ENCODE measurements at regions of chr2 and their contacts with region 1.

Region 1: DNA sequence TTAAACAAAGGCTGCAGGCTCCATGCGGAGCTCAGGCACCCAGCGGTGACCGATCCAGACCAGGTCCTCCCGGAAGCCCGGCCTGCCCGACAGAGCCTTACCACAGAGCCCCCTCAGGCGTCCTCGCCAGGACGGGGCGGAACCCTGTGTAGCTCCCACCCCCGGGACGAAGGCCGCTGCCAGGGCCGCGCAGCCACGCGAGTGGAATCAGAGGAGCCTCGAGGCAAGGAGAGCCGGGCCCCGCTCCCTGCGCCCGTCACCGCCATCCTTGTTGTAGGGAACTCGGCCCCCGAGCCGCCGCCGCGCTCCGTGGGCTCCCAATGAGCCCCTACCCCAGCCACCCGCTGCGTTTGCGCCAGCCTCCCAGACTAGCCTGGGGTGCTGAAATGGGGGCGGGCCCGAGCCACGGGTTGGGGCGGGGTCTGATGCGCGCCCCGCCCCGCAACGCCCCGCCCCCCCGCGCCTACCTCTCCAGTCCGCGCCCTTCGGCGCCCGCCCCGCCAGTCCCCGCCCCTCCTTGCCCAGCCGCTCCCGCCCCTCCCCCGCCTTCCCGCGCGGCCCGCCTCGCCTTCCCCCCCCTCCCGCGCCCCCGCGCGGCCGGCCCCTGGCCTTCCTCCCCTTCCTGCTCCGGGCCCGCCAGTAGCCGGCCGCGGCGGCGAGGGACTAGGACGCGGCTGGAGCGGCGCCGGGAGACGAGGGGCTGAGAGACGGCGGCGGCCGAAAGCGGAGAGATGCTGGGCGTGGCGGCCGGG is at the start of gene LIMS1:
- DNase-seq: peak; percentile 87 to 90
- ATAC-seq: peak; percentile 85 to 86
- H3K4me3 ChIP-seq: peak within 1 kb of the TSS; percentile 66 to 99 (median 72)
- H3K27ac ChIP-seq: peak within 1 kb of the TSS; percentile 88 to 99 (median 90)
- H3K4me1 ChIP-seq: peaks cover 14 to 19% of the 10 kb centered on the region in 2 donors
- H3K27me3 ChIP-seq: no peaks in the 10 kb centered on the region
- CTCF ChIP-seq: peak in 1 of 5 experiments; percentile 16
- POLR2A ChIP-seq: peak; percentile 90 to 93
- total RNA-seq, gene LIMS1: 147 to 308 (median 224) TPM

Region 2: DNA sequence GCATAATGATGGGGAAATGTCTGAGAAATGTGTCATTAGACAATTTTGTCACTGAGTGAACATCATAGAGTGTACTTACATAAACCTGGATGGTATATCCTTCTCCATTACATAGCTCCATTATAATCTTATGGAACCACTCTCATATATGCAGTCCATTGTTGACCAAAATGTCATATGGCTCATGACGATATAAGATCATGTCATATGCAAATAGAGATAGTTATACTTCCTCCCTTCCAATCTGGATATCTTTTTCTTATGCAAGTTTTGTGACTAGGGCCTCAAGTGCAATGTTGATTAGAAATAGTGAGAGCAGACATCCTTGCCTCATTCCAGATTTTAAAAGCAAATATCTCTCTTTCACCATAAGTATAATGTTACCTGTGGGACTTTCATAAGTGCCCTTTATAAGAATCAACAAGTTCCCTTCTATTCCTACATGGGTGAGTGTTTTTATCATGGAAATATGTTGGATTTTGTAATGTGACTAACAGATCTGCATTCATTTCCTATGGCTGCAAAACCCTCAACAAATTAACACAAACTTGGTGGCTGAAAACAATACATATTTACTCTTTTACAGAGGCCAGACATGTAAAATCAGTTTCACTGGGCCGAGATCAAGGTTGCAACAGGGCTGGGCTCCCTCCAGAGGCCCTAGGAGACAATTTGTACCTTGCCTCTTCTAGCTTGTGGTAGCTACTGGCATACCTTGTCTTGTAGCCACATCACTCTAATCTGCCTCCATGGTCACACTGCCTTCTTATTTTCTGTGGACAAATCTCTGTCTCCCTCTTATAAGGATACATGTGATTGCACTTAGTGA is 177.9 kb before region 1 on chr2:
- in situ Hi-C with region 1: no loop called
- intact Hi-C with region 1: no loop called
- DNase-seq: no peak
- ATAC-seq: no peak
- H3K4me3 ChIP-seq: no peak overlapping the region
- H3K27ac ChIP-seq: no peak overlapping the region
- H3K4me1 ChIP-seq: no peaks in the 10 kb centered on the region
- H3K27me3 ChIP-seq: no peaks in the 10 kb centered on the region
- CTCF ChIP-seq: no peak
- POLR2A ChIP-seq: no peak

Region 3: DNA sequence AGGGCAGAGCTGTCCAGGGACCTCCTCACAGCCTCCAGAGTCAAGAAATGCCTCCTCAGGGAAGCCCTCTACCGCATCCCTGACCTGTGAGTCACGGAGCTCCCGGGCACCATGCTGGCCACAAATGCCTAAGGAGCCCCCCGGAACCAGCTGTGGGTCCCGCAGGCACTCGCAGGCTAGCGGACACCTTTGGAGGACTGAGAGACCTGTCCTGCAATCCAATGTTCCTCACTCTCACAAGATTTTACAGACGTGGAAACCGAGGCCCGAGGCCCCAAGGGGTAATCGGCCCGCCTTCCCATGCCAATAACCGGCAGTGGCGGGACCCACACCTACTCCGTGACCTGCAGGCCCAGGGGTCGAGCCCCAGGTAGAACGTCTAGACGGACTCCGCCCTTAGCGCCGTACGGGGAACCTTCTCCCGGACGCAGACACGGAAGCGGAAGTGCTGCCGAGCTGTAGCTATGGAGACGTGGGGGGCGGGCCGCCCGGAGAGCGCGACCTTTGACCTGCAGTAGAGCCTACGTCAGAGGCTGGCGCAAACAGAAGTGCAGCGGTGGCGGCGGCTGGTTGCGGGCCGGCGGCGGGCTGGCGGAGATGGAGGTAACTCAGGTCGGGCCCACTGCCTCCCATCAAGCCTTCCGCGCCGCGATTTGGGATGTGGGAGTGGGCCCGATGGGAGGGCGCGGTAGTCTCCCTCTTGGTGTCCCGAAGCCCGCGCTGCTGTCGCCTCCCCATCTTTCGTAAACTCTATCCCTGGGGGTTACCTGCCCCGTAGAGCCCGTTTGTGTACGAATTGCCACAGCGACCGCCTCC is 85.1 kb before region 1 on chr2 and contains the start of gene GCC2:
- in situ Hi-C with region 1: no loop called
- intact Hi-C with region 1: loop called (anchors 1 kb)
- DNase-seq: peak; percentile 86 to 93
- ATAC-seq: peak; percentile 98 to 100
- H3K4me3 ChIP-seq: peak within 1 kb of the TSS; percentile 73 to 100 (median 85)
- H3K27ac ChIP-seq: peak within 1 kb of the TSS; percentile 79 to 90 (median 84)
- H3K4me1 ChIP-seq: peaks cover 13 to 14% of the 10 kb centered on the region in 2 donors
- H3K27me3 ChIP-seq: no peaks in the 10 kb centered on the region
- CTCF ChIP-seq: no peak
- POLR2A ChIP-seq: peak; percentile 71 to 74
- total RNA-seq, gene GCC2: 16.7 to 43.1 (median 19.3) TPM

Region 4: GRCh38 chr2:108477099-108477498 is 56.9 kb before region 1 on chr2:
- in situ Hi-C with region 1: no loop called
- intact Hi-C with region 1: no loop called
- DNase-seq: no peak
- ATAC-seq: no peak
- H3K4me3 ChIP-seq: no peak overlapping the region
- H3K27ac ChIP-seq: no peak overlapping the region
- H3K4me1 ChIP-seq: no peaks in the 10 kb centered on the region
- H3K27me3 ChIP-seq: no peaks in the 10 kb centered on the region
- CTCF ChIP-seq: no peak
- POLR2A ChIP-seq: no peak

Region 5: DNA sequence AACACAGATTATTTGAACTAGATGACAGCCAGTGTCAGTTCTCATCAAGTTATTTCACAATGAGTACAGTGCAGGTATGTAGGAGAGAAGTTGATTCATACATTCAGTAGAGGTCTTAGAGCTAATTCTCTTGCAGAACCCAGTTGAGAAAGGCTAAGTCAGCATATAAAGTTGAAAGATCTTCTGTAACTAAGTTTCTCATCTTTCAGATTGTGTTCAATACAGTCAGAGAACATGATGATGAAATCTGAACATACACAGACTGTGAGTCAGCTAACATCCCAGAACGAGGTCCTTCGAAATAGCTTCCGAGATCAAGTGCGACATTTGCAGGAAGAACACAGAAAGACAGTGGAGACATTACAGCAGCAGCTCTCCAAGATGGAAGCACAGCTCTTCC is 41.6 kb before region 1 on chr2:
- in situ Hi-C with region 1: no loop called
- intact Hi-C with region 1: loop called (anchors 5 kb)
- DNase-seq: peak in 1 of 2 donors; percentile 16
- ATAC-seq: peak; percentile 97 to 98
- H3K4me3 ChIP-seq: no peak overlapping the region
- H3K27ac ChIP-seq: peak overlapping the region in 1 of 4 donors; percentile 36
- H3K4me1 ChIP-seq: no peaks in the 10 kb centered on the region
- H3K27me3 ChIP-seq: no peaks in the 10 kb centered on the region
- CTCF ChIP-seq: no peak
- POLR2A ChIP-seq: no peak

Region 6: DNA sequence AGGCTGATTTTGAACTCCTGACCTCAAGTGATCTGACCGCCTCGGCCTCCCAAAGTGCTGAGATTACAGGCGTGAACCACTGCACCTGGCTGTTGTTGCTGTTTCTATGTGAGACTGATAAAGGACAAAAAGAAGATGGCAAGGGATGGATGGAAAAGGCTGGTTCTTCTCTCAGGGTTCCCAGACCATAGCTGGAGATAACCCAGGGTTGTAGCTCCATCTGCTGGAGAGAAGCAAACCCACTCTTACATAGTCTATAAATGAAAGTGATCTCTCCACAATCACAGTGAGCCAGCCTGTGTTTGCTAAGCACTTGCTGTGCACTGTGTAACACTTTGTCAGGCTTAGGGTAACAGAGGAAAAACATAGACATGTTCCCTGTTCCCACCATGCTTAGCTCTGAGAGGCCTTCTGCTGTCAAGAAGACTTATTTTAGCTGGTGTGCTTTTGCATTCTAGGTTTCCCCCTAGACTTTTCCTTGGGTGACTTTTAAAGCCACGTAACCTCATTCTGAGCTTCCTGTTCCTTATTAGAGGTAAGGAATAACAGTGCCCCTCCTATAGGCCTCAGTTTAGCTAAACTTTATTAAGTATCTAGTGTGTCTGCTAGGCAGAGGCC is 50.0 kb after region 1 on chr2:
- in situ Hi-C with region 1: loop called in 1 of 4 experiments (anchors 5 kb)
- intact Hi-C with region 1: loop called (anchors 2 kb)
- DNase-seq: peak; percentile 52 to 71
- ATAC-seq: peak; percentile 77 to 85
- H3K4me3 ChIP-seq: no peak overlapping the region
- H3K27ac ChIP-seq: peak overlapping the region; percentile 30 to 79 (median 64)
- H3K4me1 ChIP-seq: peaks cover 56 to 57% of the 10 kb centered on the region in 2 donors
- H3K27me3 ChIP-seq: no peaks in the 10 kb centered on the region
- CTCF ChIP-seq: peak; percentile 70 to 82 (median 78)
- POLR2A ChIP-seq: no peak

Region 7: DNA sequence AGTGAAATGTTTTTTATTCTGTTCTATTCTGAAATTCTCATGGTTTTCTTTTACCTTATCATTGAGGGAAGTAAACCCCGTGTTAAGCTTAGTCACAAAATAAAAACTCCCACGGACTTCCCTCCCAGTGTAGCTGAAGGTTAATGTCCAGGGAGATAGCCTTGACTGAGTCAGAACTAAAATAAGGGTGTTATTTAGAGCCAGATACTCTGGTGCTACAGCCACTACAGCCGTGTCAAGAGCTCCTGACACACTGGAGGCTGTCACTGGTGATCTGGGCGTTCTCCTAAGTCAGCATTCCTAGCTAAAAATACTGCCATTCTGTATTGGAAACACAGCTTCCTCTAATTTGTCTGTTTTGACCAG is 103.3 kb after region 1 on chr2:
- in situ Hi-C with region 1: no loop called
- intact Hi-C with region 1: loop called (anchors 1 kb)
- DNase-seq: peak; percentile 87 to 88
- ATAC-seq: peak; percentile 84
- H3K4me3 ChIP-seq: no peak overlapping the region
- H3K27ac ChIP-seq: peak overlapping the region; percentile 86 to 95 (median 92)
- H3K4me1 ChIP-seq: peaks cover 74 to 88% of the 10 kb centered on the region in 2 donors
- H3K27me3 ChIP-seq: no peaks in the 10 kb centered on the region
- CTCF ChIP-seq: no peak
- POLR2A ChIP-seq: peak; percentile 43 to 69